Activated B cell treated with CpG ODN at 0.5 μM for 24 hours (primary cell): ENCODE measurements at regions of chr3 and their contacts with region 1.

Region 1: DNA sequence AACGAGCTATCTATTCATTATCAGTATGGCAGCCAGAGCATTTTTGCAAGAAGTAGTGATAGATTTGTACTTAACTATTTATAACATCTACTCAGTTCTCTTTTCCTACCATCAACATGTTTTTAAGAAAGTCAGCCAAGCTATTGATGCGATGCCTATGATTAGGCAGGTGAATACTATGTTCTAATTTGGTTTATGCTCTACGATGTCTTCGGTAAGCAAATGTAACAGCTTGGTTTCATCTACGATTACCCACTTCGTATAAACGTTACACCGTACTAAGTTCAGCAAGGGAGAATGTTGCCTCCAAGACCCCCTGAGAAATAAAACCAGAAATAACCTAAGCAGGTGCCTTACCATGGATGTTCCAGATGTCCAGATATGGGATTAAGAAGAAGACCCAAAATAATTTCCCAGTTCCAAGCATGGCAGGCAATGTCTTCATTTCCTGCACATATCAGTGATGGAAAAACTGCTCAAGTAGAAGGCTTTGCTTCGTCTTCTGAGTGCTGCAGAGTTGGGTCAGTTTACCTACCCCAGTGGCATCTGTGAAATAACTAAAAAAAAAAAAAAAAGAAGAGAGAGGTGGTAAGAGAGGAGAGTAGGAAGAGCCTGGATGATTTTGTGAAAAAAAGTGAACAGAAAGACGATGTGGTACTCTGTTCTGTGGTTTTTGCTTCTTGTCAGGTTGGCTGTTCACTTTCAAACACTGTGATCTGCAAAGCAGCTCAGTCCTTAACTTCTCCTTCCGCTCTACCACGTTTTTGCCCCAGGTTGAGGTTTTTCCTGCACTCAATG is at the start of gene BTLA:
- DNase-seq: no peak
- ATAC-seq: peak; percentile 68
- H3K4me3 Mint-ChIP-seq: peak within 1 kb of the TSS; percentile 92
- H3K27ac Mint-ChIP-seq: peak within 1 kb of the TSS; percentile 99
- H3K4me1 Mint-ChIP-seq: peaks cover 82% of the 10 kb centered on the region
- H3K27me3 Mint-ChIP-seq: no peaks in the 10 kb centered on the region
- CTCF ChIP-seq: no peak
- total RNA-seq, gene BTLA: 49.8 and 53.2 TPM in 2 replicates

Region 2: GRCh38 chr3:112128843-112129727 is 370.0 kb before region 1 on chr3:
- CTCF ChIA-PET with region 1: no interaction called
- POLR2A ChIA-PET with region 1: interaction called, 6 read pairs
- intact Hi-C with region 1: loop called (anchors 2 kb)
- DNase-seq: peak; percentile 39
- ATAC-seq: peak; percentile 73
- H3K4me3 Mint-ChIP-seq: peak overlapping the region; percentile 6
- H3K27ac Mint-ChIP-seq: peak overlapping the region; percentile 82
- H3K4me1 Mint-ChIP-seq: peaks cover 91% of the 10 kb centered on the region
- H3K27me3 Mint-ChIP-seq: no peaks in the 10 kb centered on the region
- CTCF ChIP-seq: no peak

Region 3: GRCh38 chr3:112437146-112438022 is 61.7 kb before region 1 on chr3:
- CTCF ChIA-PET with region 1: interaction called, 3 read pairs
- POLR2A ChIA-PET with region 1: interaction called, 13 read pairs
- intact Hi-C with region 1: no loop called
- DNase-seq: no peak
- ATAC-seq: peak; percentile 84
- H3K4me3 Mint-ChIP-seq: no peak overlapping the region
- H3K27ac Mint-ChIP-seq: no peak overlapping the region
- H3K4me1 Mint-ChIP-seq: peaks cover 58% of the 10 kb centered on the region
- H3K27me3 Mint-ChIP-seq: no peaks in the 10 kb centered on the region
- CTCF ChIP-seq: no peak

Region 4: DNA sequence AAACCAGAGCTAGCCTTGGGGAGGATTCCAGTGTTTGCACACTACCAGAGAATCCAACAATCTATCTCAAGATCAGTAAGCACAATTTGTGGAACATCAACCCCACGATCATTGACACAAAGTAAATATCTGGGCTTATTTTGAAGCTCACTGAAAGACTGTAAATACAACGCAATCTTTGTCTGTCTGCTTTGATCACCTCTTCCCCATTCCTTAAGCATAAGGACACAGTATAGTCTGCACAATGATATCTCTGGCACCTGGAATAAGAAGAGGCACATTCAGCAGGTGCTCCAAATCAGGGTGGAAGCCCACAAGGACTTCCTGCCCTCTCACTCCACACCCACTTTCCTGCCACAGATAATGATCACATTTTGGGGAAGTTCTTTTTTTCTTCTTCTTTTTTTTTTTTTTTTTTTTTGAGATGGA is 25.9 kb before region 1 on chr3:
- CTCF ChIA-PET with region 1: interaction called, 6 read pairs
- POLR2A ChIA-PET with region 1: interaction called, 27 read pairs
- intact Hi-C with region 1: loop called (anchors 2 kb)
- DNase-seq: no peak
- ATAC-seq: peak; percentile 80
- H3K4me3 Mint-ChIP-seq: peak overlapping the region; percentile 82
- H3K27ac Mint-ChIP-seq: peak overlapping the region; percentile 98
- H3K4me1 Mint-ChIP-seq: peaks cover 88% of the 10 kb centered on the region
- H3K27me3 Mint-ChIP-seq: no peaks in the 10 kb centered on the region
- CTCF ChIP-seq: no peak

Region 5: GRCh38 chr3:112512320-112512719 is 13.2 kb after region 1 on chr3:
- CTCF ChIA-PET with region 1: interaction called, 11 read pairs
- POLR2A ChIA-PET with region 1: interaction called, 68 read pairs
- intact Hi-C with region 1: loop called (anchors 1 kb)
- DNase-seq: no peak
- ATAC-seq: no peak
- H3K4me3 Mint-ChIP-seq: no peak overlapping the region
- H3K27ac Mint-ChIP-seq: no peak overlapping the region
- H3K4me1 Mint-ChIP-seq: peaks cover 69% of the 10 kb centered on the region
- H3K27me3 Mint-ChIP-seq: no peaks in the 10 kb centered on the region
- CTCF ChIP-seq: no peak